Ovary (tissue), 10 donors: ENCODE measurements at regions of chr7 and their contacts with region 1.

Region 1: GRCh38 chr7:47818796-47819606 is 129.3 kb downstream of the PKD1L1 start:
- DNase-seq: peak; percentile 76 to 87 (median 82)
- H3K4me3 ChIP-seq: no peak overlapping the region
- H3K27ac ChIP-seq: no peak overlapping the region
- H3K4me1 ChIP-seq: peaks cover 2% of the 10 kb centered on the region
- H3K27me3 ChIP-seq: no peaks in the 10 kb centered on the region
- CTCF ChIP-seq: peak; percentile 58 to 94 (median 91)
- EP300 ChIP-seq: no peak
- POLR2A ChIP-seq: no peak

Region 2: DNA sequence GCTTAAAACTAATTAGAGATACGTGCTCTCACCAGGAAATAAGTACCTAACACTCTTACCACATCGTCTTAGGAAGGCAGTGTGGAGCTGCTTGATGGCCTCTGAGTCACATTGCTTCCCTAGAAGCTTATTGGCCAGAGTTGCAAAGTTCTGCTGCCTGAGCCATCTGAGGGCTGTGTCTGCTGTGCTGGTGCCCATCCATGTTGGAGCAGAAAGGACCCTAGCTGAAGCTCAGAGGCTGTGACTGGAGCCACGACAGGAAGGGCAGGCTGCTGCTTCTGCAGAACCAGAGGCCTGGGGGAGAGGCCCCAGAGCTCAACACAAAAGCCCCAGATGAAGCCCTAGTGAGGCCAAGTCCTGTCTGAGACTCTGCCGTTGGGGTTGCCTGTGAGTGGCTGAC is 1833.1 kb before region 1 on chr7:
- intact Hi-C with region 1: loop called in 1 of 4 experiments (anchors 5 kb)
- DNase-seq: no peak
- H3K4me3 ChIP-seq: no peak overlapping the region
- H3K27ac ChIP-seq: no peak overlapping the region
- H3K4me1 ChIP-seq: peaks cover 7% of the 10 kb centered on the region
- H3K27me3 ChIP-seq: no peaks in the 10 kb centered on the region
- CTCF ChIP-seq: no peak
- EP300 ChIP-seq: no peak
- POLR2A ChIP-seq: no peak

Region 3: DNA sequence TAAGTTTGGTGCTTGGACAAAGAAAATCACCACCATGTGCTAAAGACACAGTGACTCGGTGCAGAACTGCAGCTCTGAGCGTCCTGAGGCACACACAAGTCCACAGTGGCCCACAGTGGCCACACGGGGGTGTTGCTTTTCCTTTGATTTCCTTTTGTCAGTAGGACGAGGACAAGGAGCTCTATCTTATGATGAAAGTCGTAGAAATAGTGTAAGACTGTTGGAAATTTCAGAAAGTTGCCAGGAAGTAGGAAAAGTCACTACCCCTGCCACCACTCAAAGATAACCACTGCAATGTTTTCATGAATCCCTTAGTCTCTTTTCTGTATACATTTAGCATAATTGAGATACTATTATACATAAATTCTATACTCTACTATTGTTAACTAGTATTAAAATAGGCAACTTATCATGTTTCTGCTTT is 383.1 kb before region 1 on chr7:
- intact Hi-C with region 1: loop called in 3 of 4 experiments (anchors 5 to 10 kb)
- DNase-seq: peak; percentile 73 to 84 (median 78)
- H3K4me3 ChIP-seq: no peak overlapping the region
- H3K27ac ChIP-seq: no peak overlapping the region
- H3K4me1 ChIP-seq: peaks cover 9% of the 10 kb centered on the region
- H3K27me3 ChIP-seq: no peaks in the 10 kb centered on the region
- CTCF ChIP-seq: peak; percentile 45 to 72 (median 64)
- EP300 ChIP-seq: no peak
- POLR2A ChIP-seq: no peak

Region 4: DNA sequence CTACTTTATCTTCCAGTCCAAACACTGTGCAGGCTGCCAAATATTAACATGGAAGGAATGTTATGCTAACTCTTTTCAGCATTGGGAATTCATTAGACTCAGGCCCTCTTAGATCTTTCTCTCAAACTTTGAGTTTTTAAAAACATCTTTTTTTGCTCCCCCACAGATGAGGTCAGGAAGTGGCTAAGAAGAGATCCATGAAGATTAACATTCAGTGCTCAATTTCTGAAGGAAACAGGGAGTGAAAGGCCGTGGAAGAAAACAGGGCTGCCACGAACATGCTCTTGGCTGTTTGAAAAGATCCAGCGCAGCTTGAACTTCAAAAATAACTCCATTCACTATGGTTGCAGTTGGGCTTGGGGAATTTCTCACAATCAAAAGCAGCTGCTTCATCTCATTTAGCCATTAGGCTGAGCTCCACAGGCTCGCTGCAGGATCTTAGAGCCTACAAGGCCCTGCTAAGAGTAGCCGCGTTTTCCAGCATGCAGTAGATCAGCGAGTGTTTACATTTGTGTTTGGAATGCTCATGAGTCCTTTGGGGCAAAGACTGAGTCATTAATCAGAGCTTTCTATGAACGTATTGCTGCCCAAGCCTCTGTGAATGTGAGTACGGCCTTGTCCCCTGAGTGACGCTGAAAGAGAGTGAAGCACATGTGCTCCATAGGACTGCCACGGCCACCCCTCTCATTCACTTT is 195.9 kb before region 1 on chr7:
- intact Hi-C with region 1: loop called in 1 of 4 experiments (anchors 10 kb)
- DNase-seq: peak; percentile 43 to 61 (median 58)
- H3K4me3 ChIP-seq: no peak overlapping the region
- H3K27ac ChIP-seq: peak overlapping the region; percentile 49 to 69
- H3K4me1 ChIP-seq: peaks cover 15% of the 10 kb centered on the region
- H3K27me3 ChIP-seq: no peaks in the 10 kb centered on the region
- CTCF ChIP-seq: no peak
- EP300 ChIP-seq: no peak
- POLR2A ChIP-seq: no peak

Region 5: DNA sequence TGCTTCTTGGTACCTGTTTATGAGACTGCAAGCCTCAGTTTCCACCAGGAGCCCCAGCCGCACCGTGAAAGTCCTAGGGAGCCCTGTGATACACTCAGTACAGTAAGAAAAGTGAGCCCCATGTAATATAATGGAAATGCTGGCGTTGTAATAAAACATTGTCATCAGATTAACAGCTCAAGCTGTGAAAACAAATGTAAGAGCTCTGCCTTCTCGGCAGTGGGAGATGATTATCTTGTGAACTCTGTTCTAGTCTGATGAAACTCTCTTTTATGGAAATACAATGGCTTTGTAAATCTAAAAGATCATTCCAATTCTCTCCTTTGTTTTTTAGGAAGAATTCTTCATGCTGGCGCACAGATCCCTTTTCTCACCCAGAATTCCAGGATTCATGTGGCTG is 652.2 kb after region 1 on chr7:
- intact Hi-C with region 1: no loop called
- DNase-seq: no peak
- H3K4me3 ChIP-seq: no peak overlapping the region
- H3K27ac ChIP-seq: no peak overlapping the region
- H3K4me1 ChIP-seq: no peaks in the 10 kb centered on the region
- H3K27me3 ChIP-seq: no peaks in the 10 kb centered on the region
- CTCF ChIP-seq: no peak
- EP300 ChIP-seq: no peak
- POLR2A ChIP-seq: no peak